ENCODE measurements at regions of chr5 and their contacts with region 1.

Region 1: DNA sequence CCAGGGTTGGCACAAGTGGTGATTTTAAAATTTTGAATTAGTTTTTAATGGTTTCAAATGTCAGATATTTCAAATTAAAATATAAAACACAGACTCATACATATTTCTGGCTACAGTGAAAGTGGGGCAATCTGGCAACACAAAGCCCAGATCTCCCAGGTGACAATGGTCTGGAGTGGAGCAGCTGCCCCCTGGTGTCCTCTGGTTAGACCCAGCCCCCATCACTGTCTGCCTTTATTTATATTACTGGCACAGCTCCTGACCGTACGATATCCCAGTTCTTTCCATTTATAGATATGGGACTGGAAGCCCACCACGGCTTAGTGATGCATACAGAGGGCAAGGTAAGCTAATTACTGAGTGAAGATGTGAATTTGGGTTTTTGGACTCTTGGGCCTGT is 37.3 kb downstream of the MACIR start:
- DNase-seq: peak in 2 of 9 experiments; percentile 3 to 6
- ATAC-seq: no peak
- H3K4me3 ChIP-seq: no peak overlapping the region
- H3K4me3 Mint-ChIP-seq: no peak overlapping the region
- H3K27ac ChIP-seq: no peak overlapping the region
- H3K27ac Mint-ChIP-seq: no peak overlapping the region
- H3K4me1 ChIP-seq: no peaks in the 10 kb centered on the region
- H3K4me1 Mint-ChIP-seq: no peaks in the 10 kb centered on the region
- H3K27me3 ChIP-seq: no peaks in the 10 kb centered on the region
- H3K27me3 Mint-ChIP-seq: no peaks in the 10 kb centered on the region
- CTCF ChIP-seq: no peak

Region 2: DNA sequence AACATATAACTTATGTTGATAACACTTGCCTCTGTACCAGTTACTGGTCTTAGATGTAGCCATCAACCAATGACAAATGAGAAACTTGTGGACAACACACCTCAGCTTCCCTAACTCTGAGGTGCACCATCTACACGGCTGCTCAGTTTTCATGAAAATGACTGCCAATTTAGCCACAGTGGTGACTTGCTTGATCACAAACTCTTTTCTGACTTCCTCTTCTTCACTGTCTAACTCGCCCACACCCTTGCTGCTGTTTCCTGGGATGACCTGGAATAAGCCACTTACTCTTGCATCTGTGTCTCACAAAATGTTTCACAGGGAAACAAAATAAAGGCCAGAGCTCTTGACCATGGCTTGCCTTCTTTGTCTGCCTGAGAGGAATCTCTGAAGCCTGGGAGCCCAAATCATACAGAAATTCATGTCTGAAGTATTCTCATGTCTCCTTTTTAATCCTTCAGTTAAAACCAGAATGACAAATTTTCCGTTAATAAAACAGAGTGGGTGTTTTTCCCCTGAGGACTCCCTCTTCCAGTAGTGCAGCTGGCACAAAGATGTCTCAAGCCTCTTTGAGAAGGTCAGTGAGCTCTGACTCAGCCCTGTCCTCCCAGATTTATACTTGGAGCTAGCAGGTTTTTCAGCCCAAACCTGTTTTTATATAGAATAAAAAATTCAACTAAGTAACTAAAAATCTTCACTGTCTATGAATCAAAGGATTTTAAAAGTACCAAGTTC is 667.3 kb before region 1 on chr5:
- CTCF ChIA-PET with region 1: no interaction called
- POLR2A ChIA-PET with region 1: no interaction called
- intact Hi-C with region 1: no loop called
- DNase-seq: no peak
- ATAC-seq: no peak
- H3K4me3 ChIP-seq: no peak overlapping the region
- H3K4me3 Mint-ChIP-seq: no peak overlapping the region
- H3K27ac ChIP-seq: no peak overlapping the region
- H3K27ac Mint-ChIP-seq: no peak overlapping the region
- H3K4me1 ChIP-seq: no peaks in the 10 kb centered on the region
- H3K4me1 Mint-ChIP-seq: no peaks in the 10 kb centered on the region
- H3K27me3 ChIP-seq: no peaks in the 10 kb centered on the region
- H3K27me3 Mint-ChIP-seq: peaks cover 7% of the 10 kb centered on the region
- CTCF ChIP-seq: no peak

Region 3: GRCh38 chr5:103232393-103232999 is 63.4 kb before region 1 on chr5:
- CTCF ChIA-PET with region 1: interaction called, 3 read pairs
- POLR2A ChIA-PET with region 1: no interaction called
- intact Hi-C with region 1: loop called in 1 of 2 experiments (anchors 1 kb)
- DNase-seq: peak in 3 of 9 experiments; percentile 17 to 60 (median 49)
- ATAC-seq: peak; percentile 79
- H3K4me3 ChIP-seq: no peak overlapping the region
- H3K4me3 Mint-ChIP-seq: no peak overlapping the region
- H3K27ac ChIP-seq: no peak overlapping the region
- H3K27ac Mint-ChIP-seq: no peak overlapping the region
- H3K4me1 ChIP-seq: no peaks in the 10 kb centered on the region
- H3K4me1 Mint-ChIP-seq: no peaks in the 10 kb centered on the region
- H3K27me3 ChIP-seq: no peaks in the 10 kb centered on the region
- H3K27me3 Mint-ChIP-seq: peaks cover 9% of the 10 kb centered on the region
- CTCF ChIP-seq: peak; percentile 85

Region 4: DNA sequence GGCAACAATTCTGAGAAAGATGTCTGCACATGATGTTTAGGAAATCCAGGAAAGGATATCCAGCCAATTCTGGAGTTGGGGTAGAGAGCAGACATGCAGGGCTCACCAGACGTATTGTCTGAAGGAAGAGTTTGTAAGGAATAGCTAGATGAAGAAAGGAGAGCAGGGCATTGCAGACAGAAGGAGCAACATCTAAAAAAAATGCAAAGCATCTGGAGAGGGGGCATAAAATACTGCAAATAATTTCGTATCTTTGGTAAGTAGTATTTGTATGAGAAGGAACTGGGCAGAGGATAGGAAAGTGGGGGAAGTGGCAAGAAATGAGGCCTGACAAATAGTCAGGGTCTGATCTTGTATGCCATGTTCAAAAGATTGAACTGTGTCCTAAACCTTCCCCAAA is 37.5 kb after region 1 on chr5:
- CTCF ChIA-PET with region 1: no interaction called
- POLR2A ChIA-PET with region 1: no interaction called
- intact Hi-C with region 1: no loop called
- DNase-seq: no peak
- ATAC-seq: no peak
- H3K4me3 ChIP-seq: no peak overlapping the region
- H3K4me3 Mint-ChIP-seq: no peak overlapping the region
- H3K27ac ChIP-seq: no peak overlapping the region
- H3K27ac Mint-ChIP-seq: no peak overlapping the region
- H3K4me1 ChIP-seq: no peaks in the 10 kb centered on the region
- H3K4me1 Mint-ChIP-seq: no peaks in the 10 kb centered on the region
- H3K27me3 ChIP-seq: peaks cover 0 to 3% of the 10 kb centered on the region in 2 experiments
- H3K27me3 Mint-ChIP-seq: peaks cover 5% of the 10 kb centered on the region
- CTCF ChIP-seq: no peak

Measured in CD8-positive, alpha-beta T cell (primary cell).